ENCODE measurements at regions of chr15 and their contacts with region 1.

Region 1: DNA sequence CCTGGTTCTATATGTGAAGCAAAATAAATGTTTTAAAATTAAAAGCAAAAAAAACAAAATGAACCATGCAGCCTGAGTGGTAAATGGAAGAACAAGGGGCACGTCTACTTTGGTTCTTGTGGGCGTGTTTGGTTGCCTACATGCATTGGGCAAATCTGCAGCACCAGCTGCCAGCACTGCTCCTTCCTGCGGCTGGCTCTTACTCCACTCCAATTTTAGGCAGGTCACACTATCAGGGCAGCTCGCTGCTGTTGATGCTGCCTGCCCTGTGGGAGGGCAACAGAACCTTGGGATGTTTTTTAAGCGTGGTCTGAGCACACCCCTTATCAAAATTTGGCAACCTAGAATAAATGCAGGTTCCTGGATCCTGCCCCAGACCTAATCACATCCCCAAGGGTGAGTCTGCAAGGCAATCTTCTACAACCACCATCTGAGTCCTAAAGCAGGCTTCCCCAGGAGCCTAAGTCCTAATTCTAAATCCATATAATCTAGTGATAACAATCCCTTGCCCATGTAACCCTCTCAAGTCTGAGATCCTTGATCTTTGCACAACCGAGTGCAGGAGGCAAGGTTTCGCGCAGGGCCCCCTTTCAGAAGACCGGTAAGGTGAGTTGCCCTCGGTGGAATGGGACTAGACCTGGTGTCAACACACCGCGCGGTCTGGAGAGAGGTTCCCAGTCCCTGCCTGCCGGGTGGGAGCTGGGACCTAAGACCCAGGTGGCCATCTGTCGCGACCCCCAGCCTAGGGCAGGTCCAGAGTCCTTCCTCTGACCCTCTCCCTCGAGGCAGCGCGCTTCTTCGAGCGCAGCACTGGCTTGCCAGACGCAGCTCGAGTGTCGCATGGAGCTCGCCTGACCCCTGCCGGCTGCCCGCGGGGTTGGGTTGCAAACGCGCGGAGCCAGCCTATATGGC is 15.9 kb downstream of the IVD start:
- DNase-seq: peak; percentile 83
- ATAC-seq: peak; percentile 91 to 93

Region 2: GRCh38 chr15:40217159-40217824 is 204.2 kb before region 1 on chr15:
- intact Hi-C with region 1: loop called in 1 of 2 experiments (anchors 10 kb)
- DNase-seq: no peak
- ATAC-seq: peak; percentile 90 to 93

Region 3: DNA sequence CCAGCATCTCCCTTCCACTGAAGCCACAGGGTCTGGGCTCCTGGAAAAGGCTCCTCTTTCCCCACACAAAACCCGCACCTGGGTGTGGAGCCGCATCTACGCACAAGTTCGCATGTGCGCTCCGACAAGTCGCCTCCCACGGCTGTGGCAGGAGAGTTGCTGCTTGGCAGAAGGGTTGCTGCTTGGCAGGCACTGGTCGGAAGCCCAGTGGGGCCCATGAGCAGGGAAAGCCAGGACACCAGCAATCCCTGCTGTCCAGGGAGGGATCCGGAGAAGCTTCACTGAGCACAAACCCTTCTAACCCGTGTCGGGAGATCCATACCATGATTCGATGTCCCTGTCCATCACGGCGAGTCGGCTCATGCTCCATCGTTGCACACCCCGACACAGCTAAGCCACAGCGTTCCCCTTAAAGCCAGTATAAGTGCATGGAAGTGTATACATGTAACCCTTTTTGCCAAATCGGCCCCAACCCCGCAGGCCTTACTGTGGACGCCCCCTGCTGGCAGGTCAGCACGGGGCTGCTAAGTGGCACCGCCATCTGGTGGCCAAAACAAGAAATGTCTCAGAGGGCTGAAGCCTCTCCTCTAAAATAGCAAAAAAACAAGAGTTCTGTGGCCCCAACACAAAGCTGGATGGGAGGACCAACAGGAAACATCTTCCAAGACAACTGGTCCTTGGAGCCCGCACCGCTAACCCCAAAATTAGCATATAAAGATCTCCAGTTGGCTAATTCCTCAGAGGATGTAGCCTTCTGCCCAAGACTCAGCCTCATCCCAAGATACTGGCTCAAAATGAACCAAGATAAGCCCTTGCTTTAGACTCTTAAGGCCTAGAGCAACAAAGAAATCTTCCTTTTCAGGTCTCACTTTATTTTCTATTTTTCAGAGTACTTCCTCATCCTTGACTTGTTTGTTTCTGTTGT is 146.9 kb before region 1 on chr15:
- intact Hi-C with region 1: loop called in 1 of 2 experiments (anchors 5 kb)
- DNase-seq: peak; percentile 81
- ATAC-seq: peak; percentile 36 to 46

Region 4: DNA sequence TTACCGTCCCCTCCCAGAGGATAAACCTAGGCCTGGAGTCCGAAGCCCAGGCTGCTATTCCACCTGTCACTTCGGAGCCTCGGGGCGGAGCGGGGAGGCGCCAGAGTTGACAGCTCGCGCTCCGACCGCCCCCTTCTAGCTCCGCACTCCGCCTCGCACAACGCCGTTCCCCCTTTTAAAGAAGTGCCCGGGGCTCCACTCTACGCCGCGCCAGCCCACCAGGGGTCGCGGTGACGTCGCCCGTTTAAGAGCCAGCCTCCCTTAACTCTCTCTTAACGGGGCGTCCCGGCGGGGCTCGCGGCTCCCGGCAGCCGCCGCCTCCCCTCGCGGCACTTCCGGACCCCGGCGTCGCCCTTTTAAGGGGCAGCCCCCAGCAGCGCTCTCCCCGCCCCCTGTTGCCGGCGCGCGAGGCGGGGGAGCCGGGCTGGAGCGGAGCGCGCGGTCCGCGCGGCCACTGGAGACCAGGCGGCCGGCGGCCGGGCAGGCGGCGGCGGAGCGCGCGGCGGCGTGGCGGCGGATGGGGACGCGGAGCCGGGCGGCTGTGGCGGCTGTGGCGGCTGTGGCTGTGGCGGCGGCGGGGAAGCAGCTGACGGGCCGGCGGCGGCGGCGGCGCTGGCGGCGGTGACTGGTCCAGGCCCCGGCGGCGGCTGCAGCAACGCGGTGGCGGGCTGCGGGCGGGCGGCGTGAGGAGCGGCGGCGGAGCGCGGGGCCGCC is 98.1 kb before region 1 on chr15 and contains the start of gene INAFM2:
- intact Hi-C with region 1: loop called in 1 of 2 experiments (anchors 5 kb)
- DNase-seq: peak; percentile 94
- ATAC-seq: peak; percentile 89 to 90
- total RNA-seq, gene INAFM2: 53.4 to 76.6 TPM

Region 5: DNA sequence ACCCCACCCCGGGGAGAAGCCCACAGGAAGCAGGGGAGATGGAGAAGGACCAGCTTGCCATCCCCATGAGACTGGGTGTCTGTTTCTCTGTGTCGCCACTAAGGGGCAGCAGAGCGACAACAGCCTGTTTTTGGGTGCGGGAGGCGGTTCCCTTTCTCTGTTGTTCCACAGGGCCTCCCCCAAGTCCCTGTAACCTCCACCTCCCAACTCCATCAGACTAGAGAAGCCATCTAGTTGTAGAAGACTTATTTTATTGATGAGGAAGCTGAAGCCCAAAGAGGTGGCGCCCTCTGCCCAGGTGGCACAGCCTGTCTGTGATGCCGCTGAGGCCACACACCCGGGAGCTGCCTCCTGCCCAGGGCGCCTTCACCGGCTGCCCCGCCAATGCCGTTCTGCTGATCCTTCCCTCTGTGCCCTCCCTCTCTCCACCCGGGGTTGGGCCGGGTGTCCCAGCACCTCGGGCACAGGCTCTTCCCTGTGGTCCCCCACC is 76.8 kb before region 1 on chr15:
- intact Hi-C with region 1: loop called in 1 of 2 experiments (anchors 5 kb)
- DNase-seq: peak; percentile 58
- ATAC-seq: peak in 1 of 2 donors; percentile 4

Region 6: GRCh38 chr15:40367686-40368611 is 53.6 kb before region 1 on chr15:
- intact Hi-C with region 1: loop called (anchors 2 to 10 kb)
- DNase-seq: peak; percentile 89
- ATAC-seq: peak; percentile 80 to 83

Region 7: DNA sequence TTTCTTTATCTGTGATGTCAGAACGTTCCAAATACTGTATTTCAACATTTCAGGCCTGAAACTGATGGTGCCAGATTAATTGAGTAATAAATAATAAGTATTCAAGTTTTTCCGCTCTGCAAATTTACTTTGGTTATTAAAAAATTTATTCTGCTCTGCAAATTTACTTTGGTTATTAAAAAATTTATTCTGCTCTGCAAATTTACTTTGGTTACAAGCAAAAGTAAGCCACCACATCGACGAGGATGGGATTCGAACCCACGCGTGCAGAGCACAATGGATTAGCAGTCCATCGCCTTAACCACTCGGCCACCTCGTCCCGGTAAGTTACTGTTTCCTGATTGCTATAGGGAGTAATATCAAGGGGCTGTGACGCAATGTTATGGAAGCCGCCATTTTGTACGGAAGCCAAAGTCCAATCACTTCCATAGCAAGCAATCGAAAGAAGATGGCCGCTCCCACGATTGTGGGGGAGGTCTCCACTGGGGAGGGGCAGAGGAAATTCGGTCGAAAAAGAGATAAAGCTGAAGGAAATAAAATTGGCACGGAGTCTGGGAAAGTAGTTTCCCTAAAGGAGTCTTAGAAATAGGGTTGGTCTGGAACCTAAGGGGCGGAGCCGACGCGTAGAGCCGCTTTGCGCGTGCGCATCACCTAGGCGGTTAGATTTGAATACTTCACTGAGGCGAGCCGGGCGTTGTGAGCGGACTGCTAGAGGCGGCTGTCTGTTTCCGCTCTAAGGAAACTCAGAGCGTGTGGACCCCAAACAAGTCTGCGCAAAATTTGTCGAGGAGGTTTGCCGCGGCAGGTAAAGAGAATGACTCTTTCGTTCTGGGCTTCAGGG is 172.3 kb after region 1 on chr15 and contains the start of gene KNL1:
- intact Hi-C with region 1: no loop called
- DNase-seq: peak; percentile 88
- ATAC-seq: peak; percentile 93 to 94
- total RNA-seq, gene KNL1: 0.55 to 1.1 TPM